Esophagus squamous epithelium (tissue), 5 donors: ENCODE measurements at regions of chr7 and their contacts with region 1.

Region 1: GRCh38 chr7:80699045-80699638 is 60.7 kb downstream of the CD36 start:
- DNase-seq: no peak
- H3K4me3 ChIP-seq: no peak overlapping the region
- H3K27ac ChIP-seq: no peak overlapping the region
- H3K4me1 ChIP-seq: peaks cover 3 to 12% (median 6%) of the 10 kb centered on the region in 3 donors
- H3K27me3 ChIP-seq: no peaks in the 10 kb centered on the region
- CTCF ChIP-seq: peak in 5 of 6 experiments; percentile 58 to 79 (median 62)
- POLR2A ChIP-seq: no peak

Region 2: GRCh38 chr7:80450621-80451308 is 248.4 kb before region 1 on chr7:
- intact Hi-C with region 1: no loop called
- DNase-seq: no peak
- H3K4me3 ChIP-seq: no peak overlapping the region
- H3K27ac ChIP-seq: no peak overlapping the region
- H3K4me1 ChIP-seq: no peaks in the 10 kb centered on the region
- H3K27me3 ChIP-seq: no peaks in the 10 kb centered on the region
- CTCF ChIP-seq: no peak
- POLR2A ChIP-seq: no peak

Region 3: DNA sequence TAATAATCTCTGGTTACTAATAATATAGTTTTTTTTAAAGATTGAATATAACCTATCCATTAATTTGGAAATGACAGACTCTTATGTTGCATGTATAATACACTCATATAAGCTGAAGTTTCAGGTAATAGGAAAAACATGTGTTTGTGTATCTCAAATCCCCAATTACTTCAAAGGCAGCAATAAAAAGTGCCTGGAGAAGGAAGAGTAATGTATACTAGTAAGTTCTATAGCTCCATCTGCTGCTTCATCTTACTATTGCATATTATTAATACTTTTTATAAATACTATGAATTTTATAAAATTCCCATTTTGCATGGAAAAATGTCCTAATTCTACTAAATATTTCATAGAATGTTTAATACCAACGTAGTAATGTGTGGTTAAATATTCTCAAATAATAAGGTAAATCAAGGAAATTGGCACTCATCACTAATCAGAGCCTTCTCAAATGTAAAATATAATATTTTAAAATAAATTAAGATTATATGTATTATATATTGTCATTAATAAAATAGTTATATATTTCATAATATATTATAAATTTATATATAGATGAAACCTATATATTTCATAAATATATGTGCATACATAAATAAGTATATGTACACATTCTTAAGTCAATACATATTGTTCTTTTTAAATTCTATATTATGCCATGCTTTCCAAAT is 758.8 kb after region 1 on chr7:
- intact Hi-C with region 1: loop called (anchors 10 kb)
- DNase-seq: no peak
- H3K4me3 ChIP-seq: no peak overlapping the region
- H3K27ac ChIP-seq: no peak overlapping the region
- H3K4me1 ChIP-seq: no peaks in the 10 kb centered on the region
- H3K27me3 ChIP-seq: no peaks in the 10 kb centered on the region
- CTCF ChIP-seq: peak in 5 of 6 experiments; percentile 12 to 52 (median 30)
- POLR2A ChIP-seq: no peak

Region 4: GRCh38 chr7:81469869-81470723 is 771.0 kb after region 1 on chr7:
- intact Hi-C with region 1: loop called (anchors 5 kb)
- DNase-seq: no peak
- H3K4me3 ChIP-seq: no peak overlapping the region
- H3K27ac ChIP-seq: no peak overlapping the region
- H3K4me1 ChIP-seq: peaks cover 0 to 7% (median 0%) of the 10 kb centered on the region in 3 donors
- H3K27me3 ChIP-seq: no peaks in the 10 kb centered on the region
- CTCF ChIP-seq: peak in 5 of 6 experiments; percentile 52 to 66 (median 60)
- POLR2A ChIP-seq: no peak